Tibial artery (tissue), 4 donors: ENCODE measurements at regions of chr4 and their contacts with region 1.

Region 1: GRCh38 chr4:70687821-70688794 is at the start of gene UTP3:
- DNase-seq: peak; percentile 94 to 98
- H3K4me3 ChIP-seq: peak within 1 kb of the TSS; percentile 85 to 92
- H3K27ac ChIP-seq: peak within 1 kb of the TSS; percentile 94 to 95
- H3K4me1 ChIP-seq: peaks cover 0 to 42% (median 24%) of the 10 kb centered on the region in 4 donors
- H3K27me3 ChIP-seq: no peaks in the 10 kb centered on the region
- CTCF ChIP-seq: peak; percentile 89 to 97

Region 2: GRCh38 chr4:70704331-70705145 is 16.4 kb after region 1 on chr4:
- intact Hi-C with region 1: loop called (anchors 2 kb)
- DNase-seq: peak; percentile 75 to 90
- H3K4me3 ChIP-seq: peak overlapping the region; percentile 72 to 96
- H3K27ac ChIP-seq: peak overlapping the region; percentile 91 to 95
- H3K4me1 ChIP-seq: peaks cover 0 to 29% (median 11%) of the 10 kb centered on the region in 4 donors
- H3K27me3 ChIP-seq: no peaks in the 10 kb centered on the region
- CTCF ChIP-seq: peak in 1 of 2 experiments; percentile 30